ENCODE measurements at regions of chr1 and their contacts with region 1.

Region 1: DNA sequence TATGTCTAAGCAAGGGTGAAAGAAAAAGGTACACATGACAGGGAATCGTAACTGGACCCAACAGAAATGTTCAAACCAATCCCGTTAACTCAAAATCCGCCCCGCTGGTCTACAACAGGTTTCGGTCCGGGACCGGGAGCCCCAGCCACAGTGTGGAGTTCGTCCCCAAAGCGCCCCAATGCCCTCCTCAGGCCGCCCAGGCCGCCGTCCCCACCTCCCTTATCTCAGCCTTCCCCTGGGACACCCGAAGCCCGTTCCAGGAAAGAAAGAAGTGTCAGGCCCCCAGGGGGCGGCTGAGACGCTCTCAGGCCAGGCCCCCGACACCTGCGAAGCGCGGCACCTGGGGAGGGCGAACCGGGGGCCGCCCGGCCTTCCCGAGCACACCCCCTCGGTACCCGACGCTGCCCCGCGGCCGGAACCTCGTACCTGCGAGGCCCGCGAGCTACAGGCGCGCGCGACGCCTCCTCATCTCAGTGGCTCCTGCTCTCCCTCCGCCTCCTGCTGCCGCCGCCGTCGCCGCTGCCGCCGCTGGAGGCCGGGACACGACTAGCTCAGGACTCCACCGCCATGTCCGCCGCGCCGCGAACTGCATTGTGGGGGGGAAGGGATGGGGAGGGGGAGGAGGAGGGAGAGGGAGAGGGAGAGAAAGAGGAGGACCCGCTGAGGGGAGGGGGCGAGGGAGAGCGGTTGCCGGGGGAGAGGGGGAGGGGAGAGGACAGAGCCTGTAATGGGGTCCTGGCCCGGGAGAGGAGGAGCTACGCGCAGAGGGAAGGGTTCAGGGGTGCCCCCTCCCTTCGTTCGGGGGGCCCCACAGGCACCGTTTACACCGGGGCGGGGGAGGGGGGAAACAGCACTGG is at the start of gene TUT4:
- DNase-seq: peak; percentile 74 to 95 (median 78)

Region 2: GRCh38 chr1:52404116-52404986 is 148.4 kb before region 1 on chr1 and contains the starts of genes ORC1 and PRPF38A:
- intact Hi-C with region 1: loop called (anchors 10 kb)
- DNase-seq: peak; percentile 94 to 99 (median 98)

Region 3: DNA sequence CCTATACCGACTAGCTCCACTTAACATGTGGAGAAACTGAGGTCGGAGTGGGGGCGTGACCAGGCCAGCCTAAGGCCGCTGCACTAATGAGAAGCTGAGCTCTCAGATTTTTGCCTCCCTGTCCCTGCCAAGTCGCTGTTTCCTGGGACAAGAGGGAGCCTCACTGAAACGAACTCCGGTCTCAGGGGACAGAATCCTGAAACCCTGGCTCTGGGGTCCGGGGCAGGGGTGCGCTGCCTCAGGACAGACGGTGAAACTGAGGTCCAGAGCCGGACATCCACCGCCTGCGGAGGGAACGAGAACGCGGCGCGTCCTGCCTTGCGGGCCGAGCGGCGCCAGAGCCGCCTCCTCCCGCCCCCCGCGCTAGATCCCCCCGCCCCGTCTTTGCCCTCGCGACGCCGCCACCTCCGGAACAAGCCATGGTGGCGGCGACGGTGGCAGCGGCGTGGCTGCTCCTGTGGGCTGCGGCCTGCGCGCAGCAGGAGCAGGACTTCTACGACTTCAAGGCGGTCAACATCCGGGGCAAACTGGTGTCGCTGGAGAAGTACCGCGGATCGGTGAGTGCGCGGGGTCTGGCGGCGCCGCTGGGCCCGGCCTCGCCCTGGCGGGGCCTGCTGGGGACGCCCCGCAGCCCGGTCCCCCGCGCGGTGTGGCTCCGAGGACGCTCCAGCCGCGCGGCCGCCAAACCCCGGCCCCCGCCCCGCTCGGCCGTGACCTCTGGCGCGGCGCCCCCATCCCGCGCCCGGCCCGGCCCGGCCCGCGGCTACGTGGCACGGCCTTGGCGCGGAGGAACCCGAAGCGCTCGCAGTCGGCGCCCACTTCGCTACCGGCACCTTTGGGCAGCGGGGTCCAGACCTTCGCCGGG is 49.5 kb after region 1 on chr1 and contains the start of gene GPX7:
- intact Hi-C with region 1: loop called (anchors 2 kb)
- DNase-seq: peak; percentile 21 to 90 (median 52)

Region 4: DNA sequence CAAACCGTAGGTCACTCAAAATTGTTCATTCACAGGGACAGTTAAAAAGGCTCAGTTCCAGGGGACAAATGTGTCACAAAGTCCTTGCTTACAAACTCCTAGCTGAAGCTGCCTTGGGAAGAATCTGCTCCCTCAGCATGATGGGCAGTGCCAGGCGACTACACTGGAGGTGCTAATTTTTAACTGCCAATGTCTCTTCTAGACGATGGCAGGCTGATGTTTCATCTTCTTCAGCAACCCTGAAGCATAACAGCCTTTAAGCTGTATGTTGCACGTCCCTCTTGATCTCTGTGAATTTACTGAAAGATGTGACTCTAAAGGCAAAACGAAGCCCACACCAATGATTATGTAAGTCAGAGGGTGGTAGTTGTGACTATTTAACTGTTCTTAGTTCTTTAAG is 134.1 kb after region 1 on chr1:
- intact Hi-C with region 1: loop called (anchors 5 kb)
- DNase-seq: no peak

Measured in posterior cingulate gyrus (tissue), 11 donors.